ENCODE measurements at regions of chr9 and their contacts with region 1.

Region 1: GRCh38 chr9:4137234-4137633 is 162.6 kb downstream of the GLIS3 start:
- DNase-seq: peak; percentile 96

Region 2: DNA sequence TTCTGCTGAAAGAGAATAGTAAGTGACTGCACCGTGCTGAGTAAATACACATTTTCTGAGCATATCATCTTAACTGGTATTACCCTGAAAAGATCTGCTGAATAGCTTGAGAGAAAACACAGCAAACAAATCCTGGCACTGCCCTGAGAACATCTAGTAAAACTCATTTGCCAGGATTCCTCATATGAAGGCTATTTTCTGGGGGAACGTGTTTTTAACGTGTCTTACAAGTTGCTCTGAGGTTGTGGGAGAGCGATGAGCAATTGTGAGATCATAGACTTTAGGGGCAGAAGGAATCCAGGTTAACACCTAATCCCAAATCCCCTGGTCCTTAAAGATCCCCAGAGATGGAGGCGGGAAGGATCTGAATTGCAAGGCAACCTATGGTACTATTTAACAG is 279.6 kb before region 1 on chr9:
- in situ Hi-C with region 1: no loop called
- DNase-seq: no peak

Region 3: DNA sequence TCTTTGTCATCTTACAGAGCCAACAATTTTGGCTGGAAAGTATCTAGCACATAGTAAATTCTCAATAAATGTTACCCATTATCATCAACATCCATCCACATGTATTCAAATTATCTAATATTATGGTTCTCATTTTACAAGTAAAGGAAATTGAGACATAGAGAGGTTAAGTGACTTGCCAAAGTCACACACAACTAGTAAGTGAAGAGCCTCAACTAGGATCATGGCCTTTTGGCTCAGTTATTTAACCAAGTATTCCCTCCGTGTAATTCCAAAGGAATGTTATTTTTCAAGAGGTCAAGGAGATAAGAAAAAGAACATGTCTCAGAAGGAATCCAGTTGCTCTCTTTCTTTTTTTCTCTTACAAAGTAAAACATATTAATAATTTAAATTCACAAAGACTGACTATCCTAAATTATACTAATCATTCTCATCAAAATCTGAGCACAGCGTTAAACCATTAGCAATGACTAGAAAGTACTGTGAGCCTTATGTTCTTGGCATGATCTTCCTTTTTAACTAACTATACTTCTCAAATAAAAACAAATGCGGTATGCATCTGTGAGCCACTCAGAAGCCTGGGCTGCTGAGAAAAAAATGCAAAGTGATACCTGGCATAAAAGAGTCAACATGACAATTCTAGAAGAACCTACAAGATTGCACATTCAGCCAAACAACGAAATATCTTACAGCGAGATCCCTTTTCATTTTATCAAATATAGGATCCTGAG is 188.2 kb before region 1 on chr9:
- in situ Hi-C with region 1: no loop called
- DNase-seq: peak; percentile 25

Region 4: GRCh38 chr9:4297151-4297785 is 160.0 kb after region 1 on chr9:
- in situ Hi-C with region 1: loop called (anchors 25 kb)
- DNase-seq: peak; percentile 91